ENCODE measurements at regions of chr10 and their contacts with region 1.

Region 1: GRCh38 chr10:70549962-70550458 is 52.5 kb downstream of the PRF1 start:
- DNase-seq: peak; percentile 82 to 87 (median 84)
- ATAC-seq: peak; percentile 97
- H3K4me3 ChIP-seq: no peak overlapping the region
- H3K27ac ChIP-seq: no peak overlapping the region
- H3K4me1 ChIP-seq: peaks cover 8 to 13% of the 10 kb centered on the region in 2 experiments
- H3K27me3 ChIP-seq: no peaks in the 10 kb centered on the region
- CTCF ChIP-seq: peak; percentile 92 to 96 (median 95)
- EP300 ChIP-seq: no peak
- POLR2A ChIP-seq: no peak
- RAD21 ChIP-seq: peak; percentile 98 to 99

Region 2: GRCh38 chr10:70564901-70565351 is 14.9 kb after region 1 on chr10:
- CTCF ChIA-PET with region 1: no interaction called
- POLR2A ChIA-PET with region 1: no interaction called
- in situ Hi-C with region 1: no loop called
- intact Hi-C with region 1: no loop called
- DNase-seq: no peak
- ATAC-seq: peak; percentile 15; the same call in 2 of the 3 replicates
- H3K4me3 ChIP-seq: no peak overlapping the region
- H3K27ac ChIP-seq: no peak overlapping the region
- H3K4me1 ChIP-seq: peaks cover 4 to 51% of the 10 kb centered on the region in 2 experiments
- H3K27me3 ChIP-seq: no peaks in the 10 kb centered on the region
- CTCF ChIP-seq: peak; percentile 22 to 30 (median 29); a peak in 2 of 6 replicates
- EP300 ChIP-seq: no peak
- POLR2A ChIP-seq: no peak
- RAD21 ChIP-seq: no peak

Region 3: DNA sequence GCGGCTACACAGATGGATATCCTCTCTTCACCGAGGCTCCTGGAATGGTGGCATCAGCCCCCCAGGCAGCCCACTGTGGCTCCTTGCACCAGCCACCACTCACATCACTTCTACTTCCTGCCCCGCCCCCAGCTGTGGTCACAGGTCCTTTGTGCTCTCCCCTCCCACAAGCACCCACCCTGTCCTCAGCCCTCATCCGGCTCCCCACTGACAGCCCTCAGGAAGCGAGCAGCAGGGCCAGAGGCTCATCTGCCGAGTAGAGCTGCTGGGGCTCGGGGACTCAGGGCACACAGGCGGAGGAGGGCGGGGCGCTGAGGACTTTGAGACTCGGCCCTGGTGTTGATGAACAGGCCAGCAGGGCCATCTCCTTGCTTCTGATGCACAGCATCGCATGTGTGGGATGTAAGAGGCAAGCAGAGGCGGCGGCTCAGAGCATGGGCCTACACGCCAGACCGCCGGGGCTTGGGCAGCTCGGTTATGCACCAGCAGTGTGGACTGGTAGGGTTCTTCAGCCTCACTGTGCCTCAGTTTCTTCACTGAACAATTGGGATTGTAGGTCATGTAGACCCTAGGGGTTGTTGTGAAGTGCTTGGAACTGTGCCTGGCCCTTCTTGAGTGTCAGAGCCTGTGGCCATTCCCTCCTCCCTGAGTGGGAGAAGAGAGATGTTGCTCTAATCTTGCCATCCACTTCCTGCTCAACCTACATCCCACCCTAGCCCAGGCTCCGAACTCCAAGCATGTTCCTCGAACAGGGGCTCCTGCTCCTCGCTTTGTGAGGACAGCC is 52.8 kb after region 1 on chr10 and contains the start of gene PRF1:
- CTCF ChIA-PET with region 1: no interaction called
- POLR2A ChIA-PET with region 1: no interaction called
- in situ Hi-C with region 1: no loop called
- intact Hi-C with region 1: no loop called
- DNase-seq: peak; percentile 57 to 65 (median 59)
- ATAC-seq: peak; percentile 55
- H3K4me3 ChIP-seq: no peak within 1 kb of the TSS
- H3K27ac ChIP-seq: 0 out of 3 replicates have a peak within 1 kb of the TSS, but pooled peaks have one; percentile 15
- H3K4me1 ChIP-seq: peaks cover 53 to 58% of the 10 kb centered on the region in 2 experiments
- H3K27me3 ChIP-seq: no peaks in the 10 kb centered on the region
- CTCF ChIP-seq: no peak
- EP300 ChIP-seq: 0 out of 2 replicates have a peak, but pooled peaks have one; percentile 6
- POLR2A ChIP-seq: no peak
- RAD21 ChIP-seq: no peak
- polyA plus RNA-seq, gene PRF1: 6.3 to 7.4 TPM

Region 4: DNA sequence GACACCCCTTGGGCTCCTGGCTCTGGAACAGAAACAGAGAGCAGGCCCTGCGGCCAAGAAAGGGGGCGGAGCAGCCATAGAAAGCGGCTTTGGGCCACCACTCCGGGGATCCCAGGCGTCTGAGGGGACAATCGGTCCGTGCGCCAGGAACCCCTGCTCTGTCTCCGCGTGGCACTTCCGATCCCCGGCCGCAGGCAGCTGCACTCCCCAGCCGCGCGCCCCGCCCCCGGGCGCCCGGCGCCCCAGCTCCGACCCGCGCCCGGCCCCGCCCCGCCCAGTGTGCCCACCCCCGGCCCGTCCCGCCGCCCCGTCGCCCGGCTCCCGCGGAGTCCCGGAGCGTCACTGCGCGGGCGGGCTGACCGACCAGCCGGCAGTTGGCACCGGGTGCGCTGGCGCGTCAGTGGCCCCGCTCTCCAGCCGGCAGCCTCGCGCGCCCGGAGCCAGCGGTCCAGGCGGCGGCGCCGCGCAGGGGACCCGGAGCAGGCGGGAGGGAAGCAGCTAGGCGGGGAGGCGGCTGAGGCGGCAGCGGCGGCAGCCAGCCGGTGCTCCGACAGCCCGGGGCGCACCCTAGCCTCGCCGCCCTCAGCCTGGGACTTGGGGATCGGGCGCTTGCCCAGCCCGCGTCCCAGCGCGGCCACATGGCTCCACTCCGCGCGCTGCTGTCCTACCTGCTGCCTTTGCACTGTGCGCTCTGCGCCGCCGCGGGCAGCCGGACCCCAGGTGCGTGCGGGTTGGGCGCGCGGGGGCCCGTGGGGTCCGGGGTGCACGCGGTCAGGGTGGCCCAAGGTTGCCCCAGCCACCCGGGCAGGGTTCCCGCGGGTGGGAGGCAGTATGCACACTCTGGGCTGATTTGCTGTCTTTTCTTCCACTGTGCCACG is 122.4 kb after region 1 on chr10 and contains the start of gene ADAMTS14:
- CTCF ChIA-PET with region 1: interaction called, 4 read pairs
- POLR2A ChIA-PET with region 1: interaction called, 4 read pairs
- in situ Hi-C with region 1: no loop called
- intact Hi-C with region 1: loop called (anchors 2 kb)
- DNase-seq: peak; percentile 86 to 97 (median 92)
- ATAC-seq: peak; percentile 61
- H3K4me3 ChIP-seq: peak within 1 kb of the TSS; percentile 62
- H3K27ac ChIP-seq: peak within 1 kb of the TSS; percentile 82
- H3K4me1 ChIP-seq: peaks cover 80 to 89% of the 10 kb centered on the region in 2 experiments
- H3K27me3 ChIP-seq: no peaks in the 10 kb centered on the region
- CTCF ChIP-seq: no peak
- EP300 ChIP-seq: no peak
- POLR2A ChIP-seq: no peak; the same call in 1 of the 2 replicates
- RAD21 ChIP-seq: no peak; a peak in 1 of 4 replicates
- polyA plus RNA-seq, gene ADAMTS14: 0.04 to 0.27 TPM

Region 5: GRCh38 chr10:70815504-70816219 is 265.7 kb after region 1 on chr10 and contains the start of gene SGPL1:
- CTCF ChIA-PET with region 1: interaction called, 3 read pairs
- POLR2A ChIA-PET with region 1: interaction called, 3 read pairs
- in situ Hi-C with region 1: no loop called
- intact Hi-C with region 1: loop called (anchors 1 kb)
- DNase-seq: peak; percentile 91 to 99 (median 98)
- ATAC-seq: peak; percentile 90
- H3K4me3 ChIP-seq: peak within 1 kb of the TSS; percentile 80
- H3K27ac ChIP-seq: peak within 1 kb of the TSS; percentile 43; the same call in 2 of the 3 replicates
- H3K4me1 ChIP-seq: peaks cover 22 to 25% of the 10 kb centered on the region in 2 experiments
- H3K27me3 ChIP-seq: no peaks in the 10 kb centered on the region
- CTCF ChIP-seq: peak; percentile 90 to 98 (median 97)
- EP300 ChIP-seq: no peak
- POLR2A ChIP-seq: peak; percentile 63
- RAD21 ChIP-seq: peak; percentile 96 to 98
- polyA plus RNA-seq, gene SGPL1: 8.5 to 9.1 TPM